ENCODE measurements at regions of chr19 and their contacts with region 1.

Region 1: GRCh38 chr19:38849860-38850435 is at the start of gene HNRNPL:
- DNase-seq: peak; percentile 99
- H3K4me3 ChIP-seq: peak within 1 kb of the TSS; percentile 79
- H3K27ac ChIP-seq: peak within 1 kb of the TSS; percentile 93
- H3K4me1 ChIP-seq: peaks cover 35% of the 10 kb centered on the region
- H3K27me3 ChIP-seq: no peaks in the 10 kb centered on the region
- CTCF ChIP-seq: peak; percentile 63
- total RNA-seq, gene HNRNPL: 368 and 443 TPM in 2 replicates

Region 2: GRCh38 chr19:38869856-38870607 is 20.1 kb after region 1 on chr19:
- CTCF ChIA-PET with region 1: no interaction called
- POLR2A ChIA-PET with region 1: no interaction called
- intact Hi-C with region 1: loop called (anchors 2 kb)
- DNase-seq: no peak
- H3K4me3 ChIP-seq: no peak overlapping the region
- H3K27ac ChIP-seq: no peak overlapping the region
- H3K4me1 ChIP-seq: peaks cover 15% of the 10 kb centered on the region
- H3K27me3 ChIP-seq: no peaks in the 10 kb centered on the region
- CTCF ChIP-seq: no peak

Region 3: GRCh38 chr19:38891771-38892170 is 41.8 kb after region 1 on chr19:
- CTCF ChIA-PET with region 1: interaction called, 9 read pairs
- POLR2A ChIA-PET with region 1: no interaction called
- intact Hi-C with region 1: loop called (anchors 1 kb)
- DNase-seq: no peak
- H3K4me3 ChIP-seq: no peak overlapping the region
- H3K27ac ChIP-seq: no peak overlapping the region
- H3K4me1 ChIP-seq: no peaks in the 10 kb centered on the region
- H3K27me3 ChIP-seq: no peaks in the 10 kb centered on the region
- CTCF ChIP-seq: no peak

Region 4: DNA sequence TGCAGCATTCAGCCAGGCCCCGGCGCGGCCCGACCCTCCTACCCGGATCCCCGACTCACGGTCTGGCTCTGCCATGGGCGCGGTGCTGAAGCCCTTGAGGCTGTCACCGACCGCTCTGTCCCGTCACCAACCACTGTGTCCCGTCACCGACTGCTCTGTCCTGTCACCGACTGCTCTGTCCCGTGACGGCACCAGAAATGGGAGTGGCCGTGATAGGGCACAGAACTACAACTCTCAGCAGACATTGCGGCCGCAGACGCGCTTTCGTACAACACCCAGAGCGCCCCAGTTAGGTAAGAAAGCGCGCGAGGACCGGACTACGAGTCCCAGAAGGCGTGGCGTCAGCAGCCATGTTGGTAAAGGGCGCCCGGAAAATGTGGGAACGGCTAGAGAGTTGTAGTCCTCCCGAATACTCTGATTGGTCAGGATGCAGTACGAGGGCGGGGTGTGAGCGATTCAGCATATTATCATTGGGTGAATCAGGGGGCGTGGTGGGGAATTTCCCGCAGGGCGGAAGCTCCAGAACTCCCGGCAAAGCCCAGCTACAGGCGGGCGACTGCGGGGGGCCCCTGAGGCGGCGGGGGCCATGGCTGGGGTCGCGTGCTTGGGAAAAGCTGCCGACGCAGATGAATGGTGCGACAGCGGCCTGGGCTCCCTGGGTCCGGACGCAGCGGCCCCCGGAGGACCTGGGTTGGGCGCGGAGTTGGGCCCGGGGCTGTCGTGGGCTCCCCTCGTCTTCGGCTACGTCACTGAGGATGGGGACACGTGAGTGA is 49.7 kb after region 1 on chr19 and contains the starts of genes NFKBIB and SIRT2:
- CTCF ChIA-PET with region 1: no interaction called
- POLR2A ChIA-PET with region 1: no interaction called
- intact Hi-C with region 1: loop called (anchors 1 kb)
- DNase-seq: peak; percentile 99
- H3K4me3 ChIP-seq: peak within 1 kb of the TSS; percentile 73
- H3K27ac ChIP-seq: peak within 1 kb of the TSS; percentile 64
- H3K4me1 ChIP-seq: peaks cover 16% of the 10 kb centered on the region
- H3K27me3 ChIP-seq: no peaks in the 10 kb centered on the region
- CTCF ChIP-seq: no peak
- total RNA-seq, gene NFKBIB: 18.8 and 21.6 TPM in 2 replicates
- total RNA-seq, gene SIRT2: 29.6 and 32.9 TPM in 2 replicates

Region 5: GRCh38 chr19:39001041-39001440 is 151.1 kb after region 1 on chr19:
- CTCF ChIA-PET with region 1: no interaction called
- POLR2A ChIA-PET with region 1: no interaction called
- intact Hi-C with region 1: no loop called
- DNase-seq: no peak
- H3K4me3 ChIP-seq: no peak overlapping the region
- H3K27ac ChIP-seq: no peak overlapping the region
- H3K4me1 ChIP-seq: no peaks in the 10 kb centered on the region
- H3K27me3 ChIP-seq: no peaks in the 10 kb centered on the region
- CTCF ChIP-seq: no peak

Region 6: DNA sequence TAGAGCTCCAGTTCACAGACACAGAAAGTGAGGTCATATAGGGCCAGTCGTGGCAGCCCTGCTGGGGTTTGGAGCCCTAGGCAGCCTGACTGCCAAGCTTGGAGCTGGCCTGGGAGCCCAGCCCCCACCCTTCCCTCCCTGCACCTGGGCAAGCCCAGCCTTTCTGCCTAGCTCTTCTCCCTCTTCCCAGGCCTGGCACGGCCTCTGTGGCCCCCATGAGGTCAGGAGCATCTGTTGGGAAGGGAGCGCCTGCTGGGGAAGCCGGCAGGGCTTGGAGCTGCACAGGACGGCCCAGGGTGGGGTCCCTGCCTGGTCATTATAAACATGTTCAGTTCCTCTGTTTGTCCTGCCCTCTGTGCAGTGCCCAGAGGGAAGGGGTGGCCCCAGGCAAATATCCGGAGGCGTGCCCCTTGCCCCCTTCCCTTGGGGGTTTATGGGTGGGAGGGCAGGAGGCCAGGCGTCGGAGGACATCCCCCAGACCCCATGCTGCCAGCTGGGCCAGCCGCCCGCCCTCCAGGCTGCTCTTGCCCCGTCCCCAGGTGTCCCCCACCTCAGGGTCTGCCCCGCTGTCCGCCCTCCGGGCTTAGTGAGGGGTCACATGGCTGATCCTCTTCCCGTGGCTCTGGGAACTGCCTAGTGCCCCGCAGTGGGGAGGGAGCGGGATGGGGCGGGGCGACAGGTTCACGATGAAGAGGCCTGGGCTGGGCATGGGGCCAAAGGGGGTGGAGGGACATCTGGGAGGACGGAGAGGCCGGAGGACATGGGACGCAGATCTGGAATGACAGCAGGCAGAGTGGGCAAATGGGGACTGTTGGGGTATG is 316.8 kb after region 1 on chr19:
- CTCF ChIA-PET with region 1: no interaction called
- POLR2A ChIA-PET with region 1: interaction called, 17 read pairs
- intact Hi-C with region 1: no loop called
- DNase-seq: peak; percentile 67 to 90
- H3K4me3 ChIP-seq: peak overlapping the region; percentile 53
- H3K27ac ChIP-seq: peak overlapping the region; percentile 71
- H3K4me1 ChIP-seq: peaks cover 29% of the 10 kb centered on the region
- H3K27me3 ChIP-seq: no peaks in the 10 kb centered on the region
- CTCF ChIP-seq: no peak

Measured in PC-9 (cell line).